Activated T-helper 1 cell treated with anti-CD3 and anti-CD28 coated beads, Interleukin-12 subunit alpha, Interleukin-12 subunit beta, Interleukin-2, Interleukin-4 antibody, amounts not matched to agents 30 ng/mL and 10 ng/mL and 1 ng/mL, durations not matched to agents 14 hours and 24 hours and 36 hours (primary cell): ENCODE measurements at regions of chr5 and their contacts with region 1.

Region 1: GRCh38 chr5:132369474-132370180 is at the start of gene SLC22A5:
- DNase-seq: peak; percentile 66
- H3K4me3 Mint-ChIP-seq: peak within 1 kb of the TSS; percentile 81
- H3K27ac Mint-ChIP-seq: peak within 1 kb of the TSS; percentile 70
- H3K4me1 Mint-ChIP-seq: peaks cover 33% of the 10 kb centered on the region
- H3K27me3 Mint-ChIP-seq: no peaks in the 10 kb centered on the region
- total RNA-seq, gene SLC22A5: 4.3 and 6.2 TPM in 2 replicates

Region 2: DNA sequence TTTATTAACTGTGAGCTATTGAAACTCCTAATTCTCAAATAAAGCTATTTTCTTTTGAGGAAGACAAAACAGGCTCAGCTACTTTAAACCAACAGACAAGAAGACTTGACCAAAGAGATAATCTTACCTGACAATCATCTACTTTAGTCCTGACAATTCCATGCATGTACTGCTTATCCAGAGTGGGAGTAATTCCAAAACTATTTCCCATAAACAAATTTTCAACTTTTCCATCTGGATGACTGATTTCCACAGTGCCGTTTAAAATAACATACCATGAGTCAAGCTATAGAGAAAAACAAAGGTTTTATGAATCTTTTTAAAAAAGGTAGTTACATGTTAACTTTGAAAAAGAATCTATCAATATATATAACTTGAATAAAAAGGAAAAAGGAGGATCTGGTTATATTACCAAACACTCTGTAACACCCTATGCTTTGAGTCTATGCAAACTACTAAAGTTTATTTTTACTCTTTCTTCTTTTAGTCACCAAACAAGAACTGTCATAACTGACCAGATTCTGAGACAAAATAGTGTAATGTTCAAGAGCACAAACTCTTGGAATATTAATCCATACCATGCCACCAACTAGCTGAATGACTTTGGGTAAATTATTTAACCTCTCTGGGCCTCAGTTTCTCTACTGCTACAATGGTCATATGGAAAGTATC is 864.3 kb before region 1 on chr5:
- intact Hi-C with region 1: no loop called
- DNase-seq: no peak
- H3K4me3 Mint-ChIP-seq: no peak overlapping the region
- H3K27ac Mint-ChIP-seq: no peak overlapping the region
- H3K4me1 Mint-ChIP-seq: peaks cover 14% of the 10 kb centered on the region
- H3K27me3 Mint-ChIP-seq: no peaks in the 10 kb centered on the region

Region 3: DNA sequence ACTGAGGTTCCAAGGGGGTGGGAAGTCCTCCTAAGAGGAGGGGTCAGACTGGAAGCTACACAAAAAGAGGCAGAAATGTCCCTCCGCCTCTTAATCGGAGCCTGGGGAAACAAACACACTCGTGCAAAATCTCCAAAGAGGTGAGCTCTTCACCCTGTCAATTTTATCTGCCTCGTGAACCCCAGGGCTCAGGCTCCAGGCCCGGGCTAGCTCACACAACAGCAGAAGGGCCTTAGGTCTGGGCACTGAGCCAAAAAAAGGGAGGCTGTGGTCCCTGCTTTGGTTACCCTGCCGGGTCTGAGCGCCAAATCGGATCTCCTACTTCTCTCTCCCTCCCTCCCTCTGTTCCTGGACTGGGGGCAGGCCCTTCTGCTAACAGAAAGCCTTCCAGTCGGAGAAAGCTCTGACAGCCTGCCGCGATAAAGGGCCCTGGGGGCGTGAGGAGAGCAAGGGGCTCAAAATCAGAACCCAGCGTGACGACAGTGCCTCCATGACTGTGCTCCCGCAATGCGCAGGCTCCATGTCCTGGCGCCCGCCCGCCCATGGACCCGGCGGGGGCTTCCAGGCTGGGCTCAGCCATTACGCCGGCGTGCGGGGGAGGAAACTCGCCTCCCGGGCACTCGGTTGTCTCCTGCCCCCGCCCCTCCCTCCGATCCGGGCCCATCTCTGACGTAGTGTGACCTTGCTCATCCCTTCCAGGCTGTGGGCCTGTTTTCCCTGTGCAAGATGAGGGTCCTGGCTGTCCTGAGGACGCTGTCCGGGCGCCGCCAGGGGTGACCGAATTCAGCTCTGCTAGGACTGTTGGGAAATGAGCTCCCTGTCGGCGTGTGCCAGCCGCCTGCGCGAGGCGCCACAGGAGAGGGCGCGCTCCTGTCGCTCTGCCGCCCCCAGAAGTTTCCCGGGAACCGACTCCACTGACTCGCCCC is 76.3 kb before region 1 on chr5:
- intact Hi-C with region 1: loop called (anchors 1 kb)
- DNase-seq: peak; percentile 53
- H3K4me3 Mint-ChIP-seq: peak overlapping the region; percentile 93
- H3K27ac Mint-ChIP-seq: peak overlapping the region; percentile 75
- H3K4me1 Mint-ChIP-seq: peaks cover 30% of the 10 kb centered on the region
- H3K27me3 Mint-ChIP-seq: peaks cover 15% of the 10 kb centered on the region